Activated naive CD8-positive, alpha-beta T cell treated with anti-CD3 and anti-CD28 coated beads, Interleukin-2, amount 10 ng/mL, durations not matched to agents 7 days and 5 days (primary cell): ENCODE measurements at regions of chr19 and their contacts with region 1.

Region 1: DNA sequence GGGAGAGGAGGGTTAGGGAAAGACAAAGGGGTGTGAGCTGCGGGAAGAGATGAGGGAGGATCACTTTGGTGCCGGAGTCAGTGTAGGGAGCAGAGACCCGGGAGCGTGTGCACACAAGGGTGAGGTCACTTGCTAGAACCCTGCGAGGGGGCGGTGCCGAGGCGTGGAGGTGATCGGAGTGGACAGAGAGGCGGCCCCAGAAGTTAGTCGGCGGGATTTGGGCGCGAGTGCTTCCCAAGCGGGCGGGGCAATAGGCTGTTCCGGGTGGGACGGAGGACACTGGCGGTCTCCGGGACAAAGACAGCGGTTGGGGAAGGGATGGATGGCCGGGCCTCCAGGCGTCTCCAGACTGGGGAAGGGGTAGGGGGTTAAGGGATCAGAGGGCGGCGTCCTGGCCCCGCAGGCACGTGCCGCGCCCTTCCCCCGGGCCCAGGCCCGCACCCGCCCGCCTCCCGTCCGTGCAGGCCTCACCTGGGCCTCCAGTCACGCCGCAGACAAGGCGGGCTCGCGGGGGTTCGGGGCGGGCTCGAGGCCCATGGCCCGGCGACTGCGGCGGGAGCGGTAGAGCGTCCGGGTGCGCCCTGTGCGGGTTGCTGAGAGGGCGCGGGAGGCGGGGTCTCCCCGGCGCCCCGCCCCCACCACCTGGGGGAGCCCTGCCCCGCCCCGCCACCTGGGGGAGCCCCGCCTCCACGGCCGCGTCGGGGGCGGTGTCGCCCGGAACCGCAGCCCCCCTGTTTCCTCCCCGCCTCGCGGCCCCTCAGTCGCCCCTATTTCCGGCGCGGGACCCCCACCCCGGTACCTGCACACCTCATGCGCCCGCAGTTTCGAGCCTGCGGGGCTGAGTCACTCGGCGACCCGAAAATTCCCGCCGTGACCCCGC is at the start of gene LPAR2:
- DNase-seq: peak; percentile 92
- ATAC-seq: peak; percentile 75
- H3K4me3 Mint-ChIP-seq: peak within 1 kb of the TSS; percentile 99
- H3K27ac Mint-ChIP-seq: peak within 1 kb of the TSS; percentile 96
- H3K4me1 Mint-ChIP-seq: peaks cover 26% of the 10 kb centered on the region
- H3K27me3 Mint-ChIP-seq: no peaks in the 10 kb centered on the region
- total RNA-seq, gene LPAR2: 73.6 to 73.8 TPM

Region 2: GRCh38 chr19:19597809-19598306 is 30.0 kb before region 1 on chr19:
- POLR2A ChIA-PET with region 1: interaction called, 25 read pairs
- DNase-seq: no peak
- ATAC-seq: peak; percentile 63
- H3K4me3 Mint-ChIP-seq: peak overlapping the region; percentile 64
- H3K27ac Mint-ChIP-seq: peak overlapping the region; percentile 96
- H3K4me1 Mint-ChIP-seq: peaks cover 63% of the 10 kb centered on the region
- H3K27me3 Mint-ChIP-seq: no peaks in the 10 kb centered on the region

Region 3: GRCh38 chr19:19652456-19653295 is 24.8 kb after region 1 on chr19:
- POLR2A ChIA-PET with region 1: no interaction called
- DNase-seq: no peak
- ATAC-seq: no peak
- H3K4me3 Mint-ChIP-seq: no peak overlapping the region
- H3K27ac Mint-ChIP-seq: no peak overlapping the region
- H3K4me1 Mint-ChIP-seq: no peaks in the 10 kb centered on the region
- H3K27me3 Mint-ChIP-seq: no peaks in the 10 kb centered on the region

Region 4: GRCh38 chr19:19719798-19720197 is 91.9 kb after region 1 on chr19:
- POLR2A ChIA-PET with region 1: no interaction called
- DNase-seq: no peak
- ATAC-seq: no peak
- H3K4me3 Mint-ChIP-seq: no peak overlapping the region
- H3K27ac Mint-ChIP-seq: no peak overlapping the region
- H3K4me1 Mint-ChIP-seq: peaks cover 4% of the 10 kb centered on the region
- H3K27me3 Mint-ChIP-seq: no peaks in the 10 kb centered on the region

Region 5: GRCh38 chr19:19865739-19866481 is 238.0 kb after region 1 on chr19 and contains the start of gene ZNF253:
- POLR2A ChIA-PET with region 1: no interaction called
- DNase-seq: peak; percentile 91
- ATAC-seq: peak; percentile 93
- H3K4me3 Mint-ChIP-seq: peak within 1 kb of the TSS; percentile 97
- H3K27ac Mint-ChIP-seq: peak within 1 kb of the TSS; percentile 98
- H3K4me1 Mint-ChIP-seq: peaks cover 13% of the 10 kb centered on the region
- H3K27me3 Mint-ChIP-seq: no peaks in the 10 kb centered on the region
- total RNA-seq, gene ZNF253: 25.6 to 32.4 TPM